CD8-positive, alpha-beta T cell (primary cell): ENCODE measurements at regions of chr7 and their contacts with region 1.

Region 1: DNA sequence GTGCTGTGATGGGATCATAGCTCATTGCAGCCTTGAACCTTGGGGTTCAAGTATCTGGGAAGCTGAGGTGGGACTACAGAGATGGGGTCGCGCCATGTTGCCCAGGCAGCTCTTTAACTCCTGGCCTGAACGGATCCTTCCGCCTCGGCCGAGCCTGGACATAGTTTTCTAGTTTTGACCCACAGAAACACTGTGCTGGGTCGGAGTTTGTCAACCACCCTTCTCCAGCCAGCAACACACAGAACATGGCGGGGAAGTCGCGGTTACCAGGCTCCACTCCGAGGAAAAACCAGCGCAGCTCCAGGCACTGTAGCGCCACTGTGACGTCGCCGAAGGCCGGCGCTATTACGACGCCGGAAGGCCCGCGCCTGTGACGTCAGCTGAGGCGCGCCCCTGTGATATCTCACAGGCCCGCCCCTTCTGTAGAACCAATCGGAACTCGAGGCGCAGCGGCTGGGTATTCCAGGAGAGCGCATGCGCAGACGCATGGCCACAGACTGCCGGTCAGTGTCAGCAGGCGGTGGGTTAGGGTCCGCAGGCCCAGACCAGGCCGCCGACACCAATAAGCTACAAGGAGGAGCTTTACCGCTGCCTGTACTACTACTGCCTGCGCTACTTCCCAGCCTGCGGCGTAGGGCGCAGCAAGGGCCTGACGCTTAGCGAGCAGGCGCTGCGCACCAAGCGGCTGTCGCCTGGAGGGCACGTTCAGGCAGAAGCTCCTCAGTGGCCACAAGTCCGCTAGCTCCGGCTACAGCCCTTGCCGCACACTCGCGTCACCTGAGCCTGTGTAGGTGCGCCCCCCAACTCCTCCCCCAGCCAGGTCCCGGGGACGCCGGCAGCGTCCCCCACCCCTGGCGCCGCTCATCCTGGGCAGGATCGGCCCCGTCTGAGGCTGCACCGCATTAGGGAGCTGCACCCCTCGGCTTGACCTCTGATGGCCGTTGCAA is 135.2 kb upstream of the KCTD7 start:
- DNase-seq: peak; percentile 91 to 99 (median 96)
- ATAC-seq: peak; percentile 92
- H3K4me3 ChIP-seq: peak overlapping the region; percentile 60 to 96
- H3K4me3 Mint-ChIP-seq: peak overlapping the region; percentile 92
- H3K27ac ChIP-seq: peak overlapping the region; percentile 88 to 98
- H3K27ac Mint-ChIP-seq: peak overlapping the region; percentile 99
- H3K4me1 ChIP-seq: peaks cover 6% of the 10 kb centered on the region
- H3K4me1 Mint-ChIP-seq: peaks cover 21% of the 10 kb centered on the region
- H3K27me3 ChIP-seq: no peaks in the 10 kb centered on the region
- H3K27me3 Mint-ChIP-seq: no peaks in the 10 kb centered on the region
- CTCF ChIP-seq: no peak

Region 2: GRCh38 chr7:65373608-65374351 is 1119.7 kb before region 1 on chr7 and contains the start of gene ZNF92:
- CTCF ChIA-PET with region 1: no interaction called
- POLR2A ChIA-PET with region 1: no interaction called
- intact Hi-C with region 1: loop called in 1 of 2 experiments (anchors 10 kb)
- DNase-seq: peak; percentile 90 to 97 (median 95)
- ATAC-seq: peak; percentile 98
- H3K4me3 ChIP-seq: peak within 1 kb of the TSS; percentile 91 to 98
- H3K4me3 Mint-ChIP-seq: peak within 1 kb of the TSS; percentile 94
- H3K27ac ChIP-seq: peak within 1 kb of the TSS; percentile 79 to 90
- H3K27ac Mint-ChIP-seq: peak within 1 kb of the TSS; percentile 93
- H3K4me1 ChIP-seq: peaks cover 24% of the 10 kb centered on the region
- H3K4me1 Mint-ChIP-seq: peaks cover 52% of the 10 kb centered on the region
- H3K27me3 ChIP-seq: no peaks in the 10 kb centered on the region
- H3K27me3 Mint-ChIP-seq: no peaks in the 10 kb centered on the region
- CTCF ChIP-seq: no peak
- total RNA-seq, gene ZNF92: 31.6 to 37.3 TPM

Region 3: DNA sequence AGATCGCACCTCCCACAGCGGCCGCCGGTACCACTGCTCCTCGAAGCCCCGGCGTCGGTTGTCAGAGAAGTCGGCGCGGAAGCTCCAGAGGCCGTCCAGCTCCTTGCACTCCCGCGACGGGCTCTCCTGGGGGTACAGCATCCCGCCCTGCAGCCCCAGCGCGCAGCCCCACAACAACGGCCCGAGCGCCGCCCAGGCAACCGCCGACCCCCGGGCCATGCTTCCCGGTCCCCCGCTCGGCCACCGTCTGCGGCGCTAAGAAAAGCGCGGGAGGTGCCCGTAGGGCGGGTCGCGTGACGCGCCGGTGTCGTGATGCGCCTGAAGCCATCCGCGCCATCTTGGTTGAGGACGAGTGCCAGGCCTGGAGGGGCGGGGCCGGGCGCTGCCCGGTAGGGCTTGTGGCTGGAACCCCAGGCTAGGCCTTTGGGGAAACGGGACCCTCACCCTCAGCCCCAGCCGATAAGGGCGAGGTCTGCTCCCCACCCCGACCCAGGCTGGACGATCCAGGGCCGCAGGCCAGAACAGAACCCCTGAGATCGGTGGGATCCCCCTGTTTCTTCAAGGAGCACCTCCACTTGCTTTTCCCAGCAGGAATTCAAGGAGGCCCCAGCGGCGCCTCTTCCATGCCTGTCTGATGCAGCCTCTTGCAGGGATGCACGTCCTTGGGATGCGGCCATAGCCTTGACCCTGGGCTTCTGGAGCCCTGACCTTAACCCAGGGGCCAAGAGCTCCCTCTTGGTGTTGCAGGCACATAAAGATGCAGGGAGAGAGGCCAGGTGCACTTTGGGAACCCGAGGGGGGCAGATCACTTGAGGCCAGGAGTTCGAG is 511.3 kb before region 1 on chr7 and contains the start of gene GUSB:
- CTCF ChIA-PET with region 1: no interaction called
- POLR2A ChIA-PET with region 1: interaction called, 4 read pairs
- intact Hi-C with region 1: loop called in 1 of 2 experiments (anchors 5 kb)
- DNase-seq: peak; percentile 80 to 93 (median 90)
- ATAC-seq: peak; percentile 87
- H3K4me3 ChIP-seq: peak within 1 kb of the TSS; percentile 83 to 90
- H3K4me3 Mint-ChIP-seq: peak within 1 kb of the TSS; percentile 85
- H3K27ac ChIP-seq: peak within 1 kb of the TSS; percentile 69 to 73
- H3K27ac Mint-ChIP-seq: peak within 1 kb of the TSS; percentile 88
- H3K4me1 ChIP-seq: peaks cover 18% of the 10 kb centered on the region
- H3K4me1 Mint-ChIP-seq: peaks cover 14% of the 10 kb centered on the region
- H3K27me3 ChIP-seq: no peaks in the 10 kb centered on the region
- H3K27me3 Mint-ChIP-seq: no peaks in the 10 kb centered on the region
- CTCF ChIP-seq: no peak
- total RNA-seq, gene GUSB: 37.0 to 41.8 TPM

Region 4: DNA sequence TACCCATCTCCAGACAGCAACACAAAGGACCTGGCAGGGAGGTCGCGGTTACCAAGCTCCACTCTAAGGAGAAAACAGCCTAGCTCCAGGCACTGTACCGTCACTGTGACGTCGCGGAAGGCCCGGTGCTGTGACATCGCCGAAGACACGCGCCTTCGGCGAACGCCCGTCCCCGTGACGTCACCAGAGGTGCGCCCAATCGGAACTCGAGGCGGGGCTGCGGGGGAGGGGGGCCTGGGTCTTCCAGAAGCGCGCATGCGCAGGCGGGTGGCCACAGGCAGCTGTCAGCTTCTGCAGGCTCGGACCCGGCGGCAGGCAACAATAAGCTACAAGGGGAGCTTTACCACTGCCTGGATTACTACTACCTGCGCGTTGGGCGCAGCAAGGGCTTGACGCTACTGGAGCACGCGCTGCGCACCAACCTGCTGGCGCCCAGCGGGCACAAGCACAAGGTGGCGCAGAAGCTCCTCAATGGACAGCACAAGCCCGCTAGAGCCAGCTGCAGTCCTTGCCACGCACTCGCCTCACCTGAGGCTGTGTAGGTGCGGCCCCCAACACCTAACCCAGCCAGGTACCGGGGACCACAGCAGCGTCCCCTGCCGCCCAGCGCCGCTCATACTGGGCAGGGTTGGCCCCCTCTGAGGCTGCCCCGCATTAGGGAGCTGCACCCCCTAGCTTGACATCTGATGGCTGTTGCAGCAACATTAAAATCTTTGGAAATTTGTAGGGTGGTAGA is 80.0 kb before region 1 on chr7:
- CTCF ChIA-PET with region 1: no interaction called
- POLR2A ChIA-PET with region 1: interaction called, 3 read pairs
- intact Hi-C with region 1: loop called in 1 of 2 experiments (anchors 1 kb)
- DNase-seq: peak; percentile 62 to 91 (median 85)
- ATAC-seq: peak; percentile 86
- H3K4me3 ChIP-seq: peak overlapping the region; percentile 56 to 62
- H3K4me3 Mint-ChIP-seq: peak overlapping the region; percentile 80
- H3K27ac ChIP-seq: peak overlapping the region; percentile 39 to 43
- H3K27ac Mint-ChIP-seq: peak overlapping the region; percentile 87
- H3K4me1 ChIP-seq: peaks cover 15% of the 10 kb centered on the region
- H3K4me1 Mint-ChIP-seq: peaks cover 12% of the 10 kb centered on the region
- H3K27me3 ChIP-seq: no peaks in the 10 kb centered on the region
- H3K27me3 Mint-ChIP-seq: no peaks in the 10 kb centered on the region
- CTCF ChIP-seq: peak; percentile 50

Region 5: GRCh38 chr7:66654123-66654732 is 160.7 kb after region 1 on chr7:
- CTCF ChIA-PET with region 1: no interaction called
- POLR2A ChIA-PET with region 1: interaction called, 4 read pairs
- intact Hi-C with region 1: loop called (anchors 1 to 10 kb)
- DNase-seq: peak; percentile 94 to 99 (median 98)
- ATAC-seq: peak; percentile 91
- H3K4me3 ChIP-seq: peak overlapping the region; percentile 64 to 86
- H3K4me3 Mint-ChIP-seq: peak overlapping the region; percentile 99
- H3K27ac ChIP-seq: peak overlapping the region; percentile 92 to 98
- H3K27ac Mint-ChIP-seq: peak overlapping the region; percentile 99
- H3K4me1 ChIP-seq: peaks cover 7% of the 10 kb centered on the region
- H3K4me1 Mint-ChIP-seq: peaks cover 24% of the 10 kb centered on the region
- H3K27me3 ChIP-seq: no peaks in the 10 kb centered on the region
- H3K27me3 Mint-ChIP-seq: no peaks in the 10 kb centered on the region
- CTCF ChIP-seq: no peak

Region 6: GRCh38 chr7:66844552-66845378 is 351.3 kb after region 1 on chr7:
- CTCF ChIA-PET with region 1: no interaction called
- POLR2A ChIA-PET with region 1: interaction called, 23 read pairs
- intact Hi-C with region 1: loop called (anchors 1 to 2 kb)
- DNase-seq: peak; percentile 98 to 100 (median 99)
- ATAC-seq: peak; percentile 87
- H3K4me3 ChIP-seq: peak overlapping the region; percentile 90 to 96
- H3K4me3 Mint-ChIP-seq: peak overlapping the region; percentile 97
- H3K27ac ChIP-seq: peak overlapping the region; percentile 97 to 98
- H3K27ac Mint-ChIP-seq: peak overlapping the region; percentile 100
- H3K4me1 ChIP-seq: peaks cover 13% of the 10 kb centered on the region
- H3K4me1 Mint-ChIP-seq: peaks cover 25% of the 10 kb centered on the region
- H3K27me3 ChIP-seq: no peaks in the 10 kb centered on the region
- H3K27me3 Mint-ChIP-seq: no peaks in the 10 kb centered on the region
- CTCF ChIP-seq: peak; percentile 53